ENCODE measurements at regions of chr15 and their contacts with region 1.

Region 1: DNA sequence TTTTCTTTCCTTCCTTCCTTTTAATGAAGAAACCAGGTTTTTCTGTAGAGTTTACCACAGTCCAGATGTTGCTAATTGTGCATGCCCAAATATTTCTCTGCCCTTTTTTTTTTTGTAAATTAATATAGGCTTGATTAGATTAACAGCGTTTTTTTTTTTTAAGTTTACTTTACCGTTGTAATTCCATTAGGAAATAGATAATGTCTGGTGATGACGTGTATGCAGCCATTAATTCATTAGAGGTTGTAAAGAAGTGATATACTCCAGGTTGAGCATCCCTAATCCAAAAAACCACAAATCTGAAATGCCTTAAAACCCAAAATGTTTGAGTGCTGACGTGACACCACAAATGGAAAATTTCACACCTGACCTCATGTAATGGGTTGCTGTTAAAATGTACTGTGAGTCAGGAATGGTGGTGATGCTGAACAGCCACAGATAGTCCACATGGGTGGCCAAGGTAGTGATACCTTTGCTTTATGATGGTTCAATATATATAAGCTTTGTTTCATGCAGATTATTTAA is 43.2 kb downstream of the KNL1 start:
- DNase-seq: no peak
- H3K4me3 ChIP-seq: no peak overlapping the region
- H3K27ac ChIP-seq: no peak overlapping the region
- H3K4me1 ChIP-seq: no peaks in the 10 kb centered on the region
- H3K27me3 ChIP-seq: no peaks in the 10 kb centered on the region
- CTCF ChIP-seq: no peak

Region 2: DNA sequence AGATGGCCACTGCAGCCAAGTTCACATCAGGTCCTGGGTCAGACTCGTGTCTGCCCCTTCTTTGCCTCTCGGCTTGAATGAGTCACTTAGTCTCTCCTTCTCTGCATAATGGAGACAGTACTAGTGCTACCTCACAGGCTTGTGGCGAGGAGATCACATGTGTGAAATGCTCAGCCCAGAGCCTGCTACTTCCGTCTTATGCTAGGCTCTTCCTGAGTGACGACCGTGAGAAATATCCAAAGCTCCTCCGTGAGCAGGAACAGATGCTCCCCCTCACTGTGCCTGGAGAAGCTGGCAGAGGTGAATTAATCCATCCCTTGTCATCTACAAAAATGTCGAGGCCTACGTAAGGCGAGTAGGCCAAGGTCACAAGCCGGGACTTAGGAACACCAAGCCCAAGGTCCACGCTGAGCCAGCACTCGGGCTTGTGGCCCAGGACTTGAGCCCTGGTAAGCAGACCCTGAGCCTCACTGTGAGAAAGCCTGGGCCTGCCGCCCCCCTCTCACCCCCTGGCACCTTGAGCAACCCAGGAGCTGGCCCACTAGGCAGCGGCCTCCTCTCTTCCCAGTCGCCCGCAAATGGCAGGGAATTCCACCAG is 380.5 kb before region 1 on chr15:
- CTCF ChIA-PET with region 1: no interaction called
- dilution Hi-C with region 1: no loop called
- in situ Hi-C with region 1: no loop called
- intact Hi-C with region 1: no loop called
- DNase-seq: no peak
- H3K4me3 ChIP-seq: no peak overlapping the region
- H3K27ac ChIP-seq: no peak overlapping the region
- H3K4me1 ChIP-seq: peaks cover 15% of the 10 kb centered on the region
- H3K27me3 ChIP-seq: no peaks in the 10 kb centered on the region
- CTCF ChIP-seq: no peak

Region 3: DNA sequence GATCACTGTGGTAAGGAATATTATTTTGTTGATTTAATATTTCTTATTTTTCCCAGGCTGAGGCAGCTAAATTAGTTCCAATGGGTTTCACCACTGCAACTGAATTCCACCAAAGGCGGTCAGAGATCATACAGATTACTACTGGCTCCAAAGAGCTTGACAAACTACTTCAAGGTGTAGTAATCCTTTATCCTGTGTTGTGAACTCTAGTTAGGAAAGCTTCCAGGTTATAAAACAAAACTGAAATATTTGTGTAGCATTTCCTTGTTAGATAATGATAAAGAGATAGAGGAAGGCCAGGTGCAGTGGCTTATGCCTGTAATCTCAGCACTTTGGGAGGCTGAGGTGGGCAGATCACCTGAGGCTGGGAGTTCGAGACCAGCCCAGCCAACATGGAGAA is 68.8 kb after region 1 on chr15:
- CTCF ChIA-PET with region 1: no interaction called
- dilution Hi-C with region 1: loop called (anchors 5 kb)
- in situ Hi-C with region 1: no loop called
- intact Hi-C with region 1: no loop called
- DNase-seq: no peak
- H3K4me3 ChIP-seq: no peak overlapping the region
- H3K27ac ChIP-seq: no peak overlapping the region
- H3K4me1 ChIP-seq: no peaks in the 10 kb centered on the region
- H3K27me3 ChIP-seq: no peaks in the 10 kb centered on the region
- CTCF ChIP-seq: no peak

Region 4: GRCh38 chr15:41116116-41116871 is 479.0 kb after region 1 on chr15 and contains the start of gene INO80:
- CTCF ChIA-PET with region 1: no interaction called
- dilution Hi-C with region 1: no loop called
- in situ Hi-C with region 1: no loop called
- intact Hi-C with region 1: no loop called
- DNase-seq: peak; percentile 98
- H3K4me3 ChIP-seq: peak within 1 kb of the TSS; percentile 84 to 92 (median 89)
- H3K27ac ChIP-seq: peak within 1 kb of the TSS; percentile 100
- H3K4me1 ChIP-seq: peaks cover 9% of the 10 kb centered on the region
- H3K27me3 ChIP-seq: no peaks in the 10 kb centered on the region
- CTCF ChIP-seq: no peak
- total RNA-seq, gene INO80: 14.0 to 28.0 TPM

Measured in mammary epithelial cell (primary cell).